ENCODE measurements at regions of chr1 and their contacts with region 1.

Region 1: DNA sequence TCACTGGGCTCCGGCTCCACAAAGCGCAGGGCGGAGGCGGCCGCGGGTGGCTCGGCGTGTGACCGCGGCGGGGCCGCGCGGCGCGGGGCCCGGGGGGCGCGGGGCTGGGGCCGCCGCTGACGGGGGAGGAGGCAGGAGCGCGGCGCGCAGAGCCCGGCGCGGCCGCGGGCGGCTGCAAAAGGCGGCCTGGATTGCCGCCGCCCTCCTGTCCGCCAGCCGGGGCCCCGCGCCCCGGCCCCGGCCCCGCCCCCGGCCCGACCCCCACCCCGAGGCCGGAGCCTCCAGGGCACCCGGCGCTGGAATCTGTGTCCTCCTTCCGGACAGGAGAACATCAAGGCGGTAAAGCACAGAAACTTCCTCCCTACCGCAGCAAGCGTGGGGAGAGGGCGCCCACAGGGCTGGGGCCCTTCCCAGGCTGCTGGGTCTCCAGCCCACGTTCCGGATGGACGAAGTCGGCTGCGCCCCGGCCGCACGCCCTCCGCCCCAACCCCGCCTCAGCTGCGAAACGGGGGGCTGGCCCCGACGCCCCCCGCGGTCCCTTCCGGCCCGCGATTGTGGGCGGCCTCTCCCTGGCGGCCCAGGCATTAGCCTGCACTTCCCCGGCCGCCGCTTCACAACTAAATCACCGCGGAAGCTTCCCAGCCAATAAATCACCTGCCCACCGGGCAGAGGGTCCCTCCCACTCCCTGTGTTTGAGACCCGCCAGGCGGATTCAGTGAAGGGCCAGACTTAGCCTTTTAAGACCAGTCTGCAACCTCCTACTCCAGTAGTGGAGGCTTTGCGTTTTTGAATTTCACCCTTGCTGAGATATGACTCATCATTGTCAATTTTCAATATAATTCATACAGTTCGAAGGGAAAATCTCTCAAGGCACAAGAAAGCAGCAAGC is 106.0 kb downstream of the SLC45A1 start:
- DNase-seq: peak; percentile 55 to 74
- ATAC-seq: peak; percentile 25 to 52 (median 38)
- H3K4me3 ChIP-seq: peak overlapping the region; percentile 90
- H3K27ac ChIP-seq: peak overlapping the region; percentile 98
- H3K4me1 ChIP-seq: peaks cover 72% of the 10 kb centered on the region
- H3K27me3 ChIP-seq: no peaks in the 10 kb centered on the region
- CTCF ChIP-seq: no peak

Region 2: DNA sequence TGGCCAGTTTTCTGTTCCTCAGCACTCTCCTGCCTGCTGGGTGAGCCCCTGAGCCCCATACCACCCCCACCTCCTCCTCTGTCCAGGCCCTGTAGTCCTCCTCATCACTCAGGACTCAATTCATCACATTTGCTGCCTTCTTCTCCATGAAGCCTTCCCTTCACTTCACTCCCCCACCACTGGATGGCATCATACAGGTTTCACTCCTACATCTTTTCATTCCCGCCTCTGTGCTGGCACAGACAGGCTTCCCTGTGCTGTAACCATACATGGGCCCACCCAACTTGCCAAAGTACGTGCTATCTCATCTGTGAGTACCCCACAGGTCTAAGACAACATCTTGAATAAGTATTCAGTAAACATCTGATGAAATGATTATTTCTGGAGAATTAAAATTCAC is 49.1 kb before region 1 on chr1:
- intact Hi-C with region 1: loop called (anchors 2 to 5 kb)
- DNase-seq: no peak
- ATAC-seq: peak; percentile 21 to 34 (median 28)
- H3K4me3 ChIP-seq: no peak overlapping the region
- H3K27ac ChIP-seq: peak overlapping the region; percentile 87
- H3K4me1 ChIP-seq: peaks cover 96% of the 10 kb centered on the region
- H3K27me3 ChIP-seq: no peaks in the 10 kb centered on the region
- CTCF ChIP-seq: peak; percentile 52